Activated CD4-positive, alpha-beta memory T cell treated with anti-CD3 and anti-CD28 coated beads for 36 hours (primary cell): ENCODE measurements at regions of chr14 and their contacts with region 1.

Region 1: GRCh38 chr14:61321385-61322010 is at the start of gene PRKCH:
- DNase-seq: peak; percentile 90
- H3K4me3 Mint-ChIP-seq: peak within 1 kb of the TSS; percentile 99
- H3K27ac Mint-ChIP-seq: peak within 1 kb of the TSS; percentile 93
- H3K4me1 Mint-ChIP-seq: peaks cover 24% of the 10 kb centered on the region
- H3K27me3 Mint-ChIP-seq: no peaks in the 10 kb centered on the region
- total RNA-seq, gene PRKCH: 142 to 147 TPM

Region 2: GRCh38 chr14:61296719-61297502 is 24.6 kb before region 1 on chr14:
- CTCF ChIA-PET with region 1: interaction called, 4 read pairs
- POLR2A ChIA-PET with region 1: no interaction called
- intact Hi-C with region 1: loop called (anchors 2 kb)
- DNase-seq: no peak
- H3K4me3 Mint-ChIP-seq: no peak overlapping the region
- H3K27ac Mint-ChIP-seq: no peak overlapping the region
- H3K4me1 Mint-ChIP-seq: peaks cover 44% of the 10 kb centered on the region
- H3K27me3 Mint-ChIP-seq: no peaks in the 10 kb centered on the region

Region 3: DNA sequence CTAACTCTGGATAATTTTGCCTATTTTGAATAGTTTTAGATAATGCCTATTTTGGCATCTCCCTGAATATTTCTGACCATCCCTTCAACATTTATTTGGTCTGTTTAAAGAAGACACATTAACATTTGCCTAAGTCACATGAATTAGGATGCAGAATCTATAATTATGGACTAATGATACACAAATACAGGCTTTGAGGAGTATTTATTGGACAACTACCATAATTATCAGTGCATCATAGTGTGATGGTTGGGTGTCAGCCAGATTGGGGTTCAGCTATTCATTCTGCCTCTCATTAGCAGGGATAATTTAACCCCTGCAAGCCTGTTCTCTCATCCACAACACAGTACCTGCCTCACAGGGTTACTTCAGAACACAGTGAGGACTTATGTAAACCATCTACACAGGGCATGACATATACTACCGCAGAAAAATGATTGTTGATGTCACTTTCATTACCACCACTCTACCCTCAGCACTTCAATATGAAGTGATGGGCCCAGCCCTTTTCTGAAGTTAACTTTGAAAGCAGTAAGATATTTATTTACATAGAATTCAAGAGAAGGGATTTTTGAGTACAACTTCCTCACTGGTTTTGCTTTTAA is 14.3 kb after region 1 on chr14:
- CTCF ChIA-PET with region 1: interaction called, 11 read pairs
- POLR2A ChIA-PET with region 1: interaction called, 67 read pairs
- intact Hi-C with region 1: loop called (anchors 1 kb)
- DNase-seq: peak; percentile 19
- H3K4me3 Mint-ChIP-seq: peak overlapping the region; percentile 47
- H3K27ac Mint-ChIP-seq: peak overlapping the region; percentile 97
- H3K4me1 Mint-ChIP-seq: peaks cover 85% of the 10 kb centered on the region
- H3K27me3 Mint-ChIP-seq: no peaks in the 10 kb centered on the region

Region 4: GRCh38 chr14:61456720-61457119 is 135.2 kb after region 1 on chr14:
- CTCF ChIA-PET with region 1: interaction called, 5 read pairs
- POLR2A ChIA-PET with region 1: interaction called, 23 read pairs
- intact Hi-C with region 1: no loop called
- DNase-seq: peak; percentile 87
- H3K4me3 Mint-ChIP-seq: no peak overlapping the region
- H3K27ac Mint-ChIP-seq: peak overlapping the region; percentile 60
- H3K4me1 Mint-ChIP-seq: peaks cover 81% of the 10 kb centered on the region
- H3K27me3 Mint-ChIP-seq: no peaks in the 10 kb centered on the region